GM12878 (cell line): ENCODE measurements at regions of chr1 and their contacts with region 1.

Region 1: DNA sequence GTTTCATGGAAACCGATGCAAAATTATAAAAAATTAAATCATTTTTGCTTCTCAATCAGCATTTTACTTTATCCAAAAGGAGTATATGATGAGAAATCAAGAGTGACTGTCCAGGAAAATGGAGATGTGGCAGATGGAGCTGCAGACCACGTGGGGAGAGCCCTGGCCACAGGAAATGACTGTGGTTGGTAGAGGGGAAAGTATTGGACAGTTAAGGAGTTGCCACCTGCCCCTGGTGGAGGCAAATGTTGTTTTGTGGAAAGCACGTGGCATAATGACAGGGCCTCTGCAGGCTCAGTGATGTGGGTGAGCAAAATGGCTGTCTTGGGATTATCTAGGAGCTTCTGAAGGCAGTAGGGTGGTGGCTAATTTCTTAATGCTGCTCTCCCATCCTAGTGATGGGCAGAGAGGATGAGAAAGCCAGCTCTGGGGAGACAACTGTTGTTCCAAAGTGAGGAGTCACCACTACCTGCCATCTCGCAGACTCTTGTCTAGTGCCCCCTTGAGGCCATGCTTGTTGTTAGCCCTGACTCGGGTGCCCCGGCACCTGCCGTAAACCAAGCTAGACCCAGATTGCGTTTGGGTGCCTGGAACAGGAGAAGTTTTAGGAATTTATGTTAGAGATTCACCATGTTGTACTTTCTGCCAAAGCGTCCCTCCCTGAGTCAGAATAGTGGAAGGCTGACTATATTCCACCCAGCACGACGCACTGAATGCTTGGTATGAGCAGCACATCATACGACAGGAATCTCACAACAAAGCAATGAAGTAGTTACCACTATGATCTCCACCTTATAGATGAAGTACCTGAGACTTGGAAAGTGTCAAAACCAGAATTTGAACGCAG is 144.0 kb downstream of the ROR1 start:
- DNase-seq: no peak
- ATAC-seq: peak; percentile 76
- H3K4me3 ChIP-seq: no peak overlapping the region
- H3K27ac ChIP-seq: no peak overlapping the region
- H3K4me1 ChIP-seq: no peaks in the 10 kb centered on the region
- H3K27me3 ChIP-seq: no peaks in the 10 kb centered on the region; a peak in 1 of 4 replicates
- CTCF ChIP-seq: peak; percentile 21 to 55 (median 44); a peak in 4 of 6 replicates
- EP300 ChIP-seq: no peak
- POLR2A ChIP-seq: no peak
- RAD21 ChIP-seq: peak; percentile 41; the same call in 1 of the 2 replicates

Region 2: DNA sequence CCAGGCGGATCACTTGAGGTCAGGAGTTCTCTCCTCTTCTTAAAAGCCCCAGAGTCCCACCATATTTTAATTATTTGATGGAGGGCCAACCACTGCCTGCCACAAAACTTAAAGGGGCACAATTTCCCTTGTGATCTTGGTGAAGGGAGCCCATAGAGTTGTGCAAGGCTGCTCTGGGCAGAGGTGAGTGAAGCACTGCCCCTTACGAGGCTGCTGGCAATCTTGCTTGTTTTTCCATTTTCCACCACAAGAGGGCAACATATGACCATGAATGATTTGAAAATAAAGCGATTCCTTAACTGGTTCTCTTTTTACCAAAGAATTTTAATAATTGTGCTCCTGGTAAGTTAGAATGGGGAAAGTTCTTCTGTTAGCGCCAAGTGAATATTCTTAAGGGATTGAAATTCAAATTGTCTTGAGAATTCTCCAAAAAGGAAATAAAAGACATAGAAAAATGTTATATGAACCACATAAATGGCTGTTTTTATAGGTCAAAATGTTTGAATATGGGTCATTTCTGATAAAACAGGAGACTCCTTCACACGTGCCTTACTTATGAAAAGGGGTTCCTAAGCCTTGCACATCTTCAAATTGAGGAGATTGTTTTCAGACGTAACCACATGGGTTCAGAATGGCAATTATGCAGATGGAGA is 301.9 kb before region 1 on chr1:
- CTCF ChIA-PET with region 1: interaction called, 4 read pairs
- POLR2A ChIA-PET with region 1: no interaction called
- RAD21 ChIA-PET with region 1: interaction called, 3 read pairs
- SMC1A ChIA-PET with region 1: interaction called, 3 read pairs
- in situ Hi-C with region 1: loop called (anchors 10 kb)
- intact Hi-C with region 1: loop called (anchors 5 kb)
- DNase-seq: peak; percentile 19
- ATAC-seq: peak; percentile 90
- H3K4me3 ChIP-seq: no peak overlapping the region
- H3K27ac ChIP-seq: no peak overlapping the region
- H3K4me1 ChIP-seq: no peaks in the 10 kb centered on the region
- H3K27me3 ChIP-seq: no peaks in the 10 kb centered on the region
- CTCF ChIP-seq: peak; percentile 57 to 79 (median 71); a peak in 5 of 6 replicates
- EP300 ChIP-seq: no peak
- POLR2A ChIP-seq: no peak
- RAD21 ChIP-seq: peak; percentile 76

Region 3: GRCh38 chr1:63674238-63674864 is 243.4 kb before region 1 on chr1:
- CTCF ChIA-PET with region 1: interaction called, 3 read pairs
- POLR2A ChIA-PET with region 1: no interaction called
- RAD21 ChIA-PET with region 1: interaction called, 3 read pairs
- SMC1A ChIA-PET with region 1: no interaction called
- in situ Hi-C with region 1: no loop called
- intact Hi-C with region 1: loop called (anchors 5 kb)
- DNase-seq: no peak
- ATAC-seq: peak; percentile 94
- H3K4me3 ChIP-seq: no peak overlapping the region
- H3K27ac ChIP-seq: no peak overlapping the region
- H3K4me1 ChIP-seq: no peaks in the 10 kb centered on the region
- H3K27me3 ChIP-seq: no peaks in the 10 kb centered on the region
- CTCF ChIP-seq: peak; percentile 42 to 60 (median 42); a peak in 5 of 6 replicates
- EP300 ChIP-seq: no peak
- POLR2A ChIP-seq: no peak
- RAD21 ChIP-seq: peak; percentile 50

Region 4: DNA sequence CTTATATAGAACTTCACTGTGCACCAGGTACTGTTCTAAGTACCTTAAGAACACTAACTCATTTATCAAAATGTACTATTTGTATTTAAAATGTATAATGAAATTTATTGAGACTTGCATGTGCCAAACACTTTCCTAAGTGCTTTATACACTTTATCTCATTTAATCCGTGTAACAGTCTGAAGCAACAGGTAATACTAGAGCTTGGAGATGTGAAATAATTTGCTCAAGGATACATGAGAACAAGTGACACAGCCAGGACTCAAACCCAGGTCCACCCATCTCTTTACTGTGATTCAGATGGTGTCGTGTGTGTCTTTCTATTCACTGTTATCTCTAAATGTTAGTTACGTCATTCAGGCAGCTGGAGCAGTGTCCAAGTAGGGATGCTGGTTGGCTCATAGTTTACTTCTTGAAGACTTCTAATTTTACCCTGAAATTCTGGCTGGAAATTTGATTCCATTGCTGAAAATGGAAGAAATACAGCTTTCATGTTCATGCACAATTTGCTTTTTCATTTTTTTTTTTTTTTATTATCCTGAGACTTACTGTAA is 116.0 kb after region 1 on chr1:
- CTCF ChIA-PET with region 1: no interaction called
- POLR2A ChIA-PET with region 1: no interaction called
- RAD21 ChIA-PET with region 1: no interaction called
- SMC1A ChIA-PET with region 1: no interaction called
- in situ Hi-C with region 1: no loop called
- intact Hi-C with region 1: no loop called
- DNase-seq: no peak
- ATAC-seq: no peak
- H3K4me3 ChIP-seq: no peak overlapping the region
- H3K27ac ChIP-seq: no peak overlapping the region
- H3K4me1 ChIP-seq: no peaks in the 10 kb centered on the region
- H3K27me3 ChIP-seq: peaks cover 0 to 3% of the 10 kb centered on the region in 2 experiments; a peak in 1 of 4 replicates
- CTCF ChIP-seq: no peak
- EP300 ChIP-seq: no peak
- POLR2A ChIP-seq: no peak
- RAD21 ChIP-seq: no peak